ENCODE measurements at regions of chr1 and their contacts with region 1.

Region 1: DNA sequence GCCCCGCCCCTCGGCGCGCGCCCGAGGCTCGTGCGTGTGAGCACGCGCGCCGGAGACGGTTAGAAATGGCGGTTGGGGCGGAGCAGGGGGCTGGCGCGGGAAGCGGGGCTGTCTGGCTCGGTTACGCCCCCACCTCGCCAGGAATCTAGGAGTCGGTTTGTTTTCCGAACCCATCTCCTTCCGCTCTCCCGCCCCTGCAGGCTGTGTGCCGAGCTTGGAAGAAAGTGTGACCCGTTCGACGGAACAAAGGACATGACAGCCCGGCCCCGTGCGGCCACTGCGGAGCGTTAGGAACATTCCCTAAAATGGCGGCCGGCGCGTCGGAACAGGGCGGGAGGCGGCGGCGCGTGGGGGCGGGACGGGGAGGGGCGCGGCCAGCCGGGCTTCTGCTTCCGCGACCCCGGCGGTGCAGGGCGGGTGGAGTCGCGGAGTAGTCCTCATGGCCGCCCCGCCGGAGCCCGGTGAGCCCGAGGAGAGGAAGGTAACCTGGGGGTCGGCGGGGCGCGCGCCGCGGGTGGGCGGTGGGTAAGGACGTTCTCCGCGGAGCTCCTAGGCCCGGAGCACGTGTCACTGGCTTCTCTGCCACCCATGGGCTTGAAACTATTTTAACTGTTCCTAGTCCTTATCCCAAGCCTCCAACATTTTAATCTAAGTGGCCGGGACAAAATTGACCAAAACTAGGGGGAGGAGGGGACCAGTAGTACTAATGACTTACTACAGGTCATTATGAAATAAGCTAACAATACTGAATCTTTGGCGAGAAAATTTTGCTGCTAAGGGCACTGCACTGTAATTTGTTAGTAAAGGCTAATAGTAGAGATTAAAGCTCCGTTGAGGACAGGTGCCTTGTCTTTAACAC is at the start of gene COX20:
- DNase-seq: peak; percentile 92
- ATAC-seq: peak; percentile 60
- H3K4me3 Mint-ChIP-seq: peak within 1 kb of the TSS; percentile 80
- H3K27ac Mint-ChIP-seq: peak within 1 kb of the TSS; percentile 99
- H3K4me1 Mint-ChIP-seq: peaks cover 43% of the 10 kb centered on the region
- H3K27me3 Mint-ChIP-seq: no peaks in the 10 kb centered on the region
- total RNA-seq, gene COX20: 32.0 to 33.2 TPM

Region 2: DNA sequence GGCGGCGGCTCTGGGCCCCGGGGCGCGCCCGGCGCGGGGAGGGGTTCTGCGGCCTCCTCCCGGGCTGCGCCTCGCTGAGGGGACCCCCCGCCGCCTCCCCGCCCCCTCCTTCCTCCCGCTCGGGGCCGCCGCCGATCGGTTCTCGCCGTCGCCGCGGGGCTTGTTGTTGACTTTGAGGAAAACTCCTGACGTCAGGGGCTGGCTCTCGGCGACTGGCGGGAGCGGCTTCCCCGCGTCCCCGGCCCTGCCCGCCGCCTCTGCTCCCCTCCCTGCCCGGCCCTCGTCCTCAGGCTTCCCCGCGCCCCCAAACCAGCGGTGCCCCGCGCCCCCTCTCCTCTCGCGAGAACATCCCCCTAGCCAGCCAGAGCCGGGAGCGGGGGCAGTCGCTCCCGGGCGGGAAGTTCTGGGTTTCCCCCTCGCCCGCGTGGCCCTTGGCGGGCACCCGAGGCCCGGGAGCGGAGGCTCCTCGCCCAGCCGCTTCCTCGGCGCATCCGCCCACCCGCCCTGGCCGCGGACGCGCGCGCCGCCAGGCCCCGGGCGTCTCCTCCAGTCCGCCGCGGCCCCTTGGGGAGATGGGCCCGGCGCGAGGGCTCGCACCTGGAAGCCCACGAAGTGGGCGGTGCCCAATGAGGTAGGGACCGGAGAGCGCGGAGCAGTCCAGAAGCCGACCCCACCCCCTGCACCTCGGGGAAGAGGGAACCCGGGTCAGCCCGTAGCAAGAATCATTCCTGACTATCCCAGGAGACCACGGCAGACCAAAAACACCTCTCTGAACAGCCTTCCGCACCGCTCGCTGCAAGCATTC is 984.9 kb before region 1 on chr1:
- CTCF ChIA-PET with region 1: no interaction called
- POLR2A ChIA-PET with region 1: no interaction called
- intact Hi-C with region 1: loop called in 1 of 2 experiments (anchors 1 kb)
- DNase-seq: peak; percentile 92
- ATAC-seq: peak; percentile 50
- H3K4me3 Mint-ChIP-seq: peak overlapping the region; percentile 70
- H3K27ac Mint-ChIP-seq: peak overlapping the region; percentile 92
- H3K4me1 Mint-ChIP-seq: peaks cover 33% of the 10 kb centered on the region
- H3K27me3 Mint-ChIP-seq: peaks cover 2% of the 10 kb centered on the region

Region 3: DNA sequence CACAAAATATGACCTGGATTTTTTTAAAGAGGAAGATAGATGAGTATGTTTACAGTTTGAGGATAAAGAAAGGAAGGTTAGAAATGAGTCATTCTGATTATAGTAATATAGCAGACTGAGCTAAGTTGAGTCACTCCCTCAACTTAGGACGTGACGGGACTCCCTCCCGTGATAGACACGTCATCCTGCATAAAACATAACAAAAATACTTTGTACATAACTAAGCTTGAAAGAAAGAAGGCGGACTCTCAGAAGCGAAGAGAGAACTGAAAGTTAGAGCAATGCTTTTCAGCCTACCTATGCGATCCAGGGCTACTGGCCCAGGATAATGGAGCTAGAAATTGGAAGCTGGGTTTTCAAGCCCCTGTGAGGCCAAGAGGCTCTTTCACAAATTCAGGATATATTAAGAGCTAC is 235.6 kb before region 1 on chr1:
- CTCF ChIA-PET with region 1: interaction called, 5 read pairs
- POLR2A ChIA-PET with region 1: interaction called, 5 read pairs
- intact Hi-C with region 1: loop called (anchors 1 kb)
- DNase-seq: peak; percentile 74
- ATAC-seq: peak; percentile 96
- H3K4me3 Mint-ChIP-seq: peak overlapping the region; percentile 55
- H3K27ac Mint-ChIP-seq: peak overlapping the region; percentile 95
- H3K4me1 Mint-ChIP-seq: peaks cover 20% of the 10 kb centered on the region
- H3K27me3 Mint-ChIP-seq: peaks cover 4% of the 10 kb centered on the region

Region 4: GRCh38 chr1:244849189-244849866 is 13.8 kb after region 1 on chr1:
- CTCF ChIA-PET with region 1: interaction called, 20 read pairs
- POLR2A ChIA-PET with region 1: interaction called, 14 read pairs
- intact Hi-C with region 1: no loop called
- DNase-seq: no peak
- ATAC-seq: no peak
- H3K4me3 Mint-ChIP-seq: no peak overlapping the region
- H3K27ac Mint-ChIP-seq: peak overlapping the region; percentile 65
- H3K4me1 Mint-ChIP-seq: peaks cover 63% of the 10 kb centered on the region
- H3K27me3 Mint-ChIP-seq: no peaks in the 10 kb centered on the region

Region 5: DNA sequence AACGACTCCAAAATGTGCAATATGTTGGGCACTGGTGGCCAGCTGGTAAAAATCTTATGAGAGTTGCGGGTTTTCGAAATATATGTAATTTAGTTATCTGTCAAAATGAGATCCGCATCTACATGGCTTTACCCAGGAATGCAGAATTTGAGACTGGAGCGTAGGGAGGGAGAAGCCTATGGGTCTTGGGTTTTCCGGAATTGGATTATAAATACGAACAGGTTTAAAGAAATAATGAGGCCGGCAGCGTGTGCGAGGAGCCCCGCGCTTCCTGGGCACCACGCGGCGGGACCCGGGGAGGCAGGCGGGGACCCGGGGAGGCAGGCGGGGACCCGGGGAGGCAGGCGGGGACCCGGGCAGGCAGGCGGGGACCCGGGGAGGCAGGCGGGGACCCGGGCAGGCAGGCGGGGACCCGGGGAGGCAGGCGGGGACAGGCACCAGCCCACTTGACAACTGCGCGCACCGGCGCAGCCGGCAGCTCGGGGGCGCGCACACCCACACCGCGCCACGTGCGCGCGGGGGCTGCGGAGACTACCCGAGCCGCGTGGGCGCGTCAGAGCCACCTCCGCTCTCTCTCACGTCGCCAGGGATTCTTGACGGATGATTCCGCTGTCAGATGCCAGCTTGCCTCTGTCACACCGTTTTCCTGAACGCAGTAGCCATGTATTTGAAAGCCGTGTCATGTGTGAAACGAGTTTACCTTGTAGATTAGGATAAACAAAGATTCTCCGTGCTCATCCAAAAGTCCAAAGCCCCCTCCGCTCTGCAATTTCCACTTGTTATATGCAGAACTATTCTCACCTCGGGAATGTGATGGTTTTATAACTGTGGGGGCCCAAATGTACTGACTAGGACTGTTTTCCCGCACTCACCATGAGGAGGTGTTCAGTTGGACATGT is 83.2 kb after region 1 on chr1:
- CTCF ChIA-PET with region 1: interaction called, 3 read pairs
- POLR2A ChIA-PET with region 1: no interaction called
- intact Hi-C with region 1: loop called (anchors 1 to 2 kb)
- DNase-seq: peak; percentile 66
- ATAC-seq: peak; percentile 86
- H3K4me3 Mint-ChIP-seq: peak overlapping the region; percentile 73
- H3K27ac Mint-ChIP-seq: peak overlapping the region; percentile 80
- H3K4me1 Mint-ChIP-seq: peaks cover 16% of the 10 kb centered on the region
- H3K27me3 Mint-ChIP-seq: peaks cover 3% of the 10 kb centered on the region

Region 6: DNA sequence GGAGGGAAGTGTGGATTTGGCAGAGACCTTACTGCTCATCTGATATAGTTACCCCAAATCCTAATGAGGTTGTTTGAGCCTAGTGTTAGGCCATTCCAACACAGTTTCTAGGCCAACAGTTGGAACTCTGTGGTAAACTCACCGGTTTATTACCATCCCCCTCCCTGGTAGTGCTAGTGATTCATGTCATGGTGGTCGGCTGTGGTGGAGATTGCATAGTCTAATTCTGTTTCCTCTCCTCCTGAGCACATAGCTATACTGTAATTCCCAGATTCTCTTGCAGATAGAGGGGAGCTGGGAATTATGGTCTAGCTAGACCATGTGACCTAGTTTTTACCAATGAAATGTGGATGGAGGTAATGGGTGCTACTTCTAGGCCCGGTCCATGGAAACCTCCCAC is 195.5 kb after region 1 on chr1:
- CTCF ChIA-PET with region 1: no interaction called
- POLR2A ChIA-PET with region 1: no interaction called
- intact Hi-C with region 1: no loop called
- DNase-seq: no peak
- ATAC-seq: no peak
- H3K4me3 Mint-ChIP-seq: no peak overlapping the region
- H3K27ac Mint-ChIP-seq: no peak overlapping the region
- H3K4me1 Mint-ChIP-seq: peaks cover 4% of the 10 kb centered on the region
- H3K27me3 Mint-ChIP-seq: no peaks in the 10 kb centered on the region